ENCODE measurements at regions of chr10 and their contacts with region 1.

Region 1: DNA sequence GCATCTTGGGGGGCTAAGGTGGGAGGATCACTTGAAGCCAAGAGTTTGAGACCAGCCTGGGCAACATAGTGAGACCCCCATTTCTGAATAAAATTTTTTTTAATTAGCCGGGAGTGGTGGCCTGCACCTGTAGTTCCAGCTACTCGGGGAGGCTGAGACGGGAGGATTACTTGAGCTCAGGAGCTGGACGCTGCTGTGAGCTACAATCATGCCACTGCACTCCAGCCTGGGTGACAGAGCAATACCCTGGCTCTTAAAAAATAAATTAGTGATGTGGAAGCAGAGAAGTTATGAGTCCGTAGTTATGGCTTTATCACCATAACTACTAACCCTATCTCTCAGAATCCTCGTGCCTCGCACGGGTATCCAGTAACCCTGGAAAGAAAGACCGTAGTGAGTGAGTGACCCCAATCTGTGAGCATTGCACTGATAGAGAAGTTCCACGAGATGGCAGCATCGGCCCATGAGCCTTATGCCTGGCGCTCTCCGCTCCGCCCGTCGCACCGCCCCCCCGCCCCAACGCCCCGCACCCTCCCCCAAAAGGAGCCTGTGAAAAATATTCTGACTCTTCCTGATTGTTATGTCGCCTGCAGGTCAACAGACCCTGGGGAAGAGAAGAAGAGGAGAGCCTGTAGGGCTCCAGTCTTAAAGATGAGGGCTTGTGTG is 4.9 kb upstream of the SLC29A3 start:
- DNase-seq: peak; percentile 71
- ATAC-seq: peak; percentile 24
- H3K4me3 Mint-ChIP-seq: no peak overlapping the region
- H3K27ac Mint-ChIP-seq: no peak overlapping the region
- H3K4me1 Mint-ChIP-seq: peaks cover 18% of the 10 kb centered on the region
- H3K27me3 Mint-ChIP-seq: peaks cover 7% of the 10 kb centered on the region

Region 2: GRCh38 chr10:71255808-71256660 is 58.1 kb before region 1 on chr10:
- CTCF ChIA-PET with region 1: no interaction called
- POLR2A ChIA-PET with region 1: no interaction called
- intact Hi-C with region 1: no loop called
- DNase-seq: no peak
- ATAC-seq: no peak
- H3K4me3 Mint-ChIP-seq: no peak overlapping the region
- H3K27ac Mint-ChIP-seq: no peak overlapping the region
- H3K4me1 Mint-ChIP-seq: no peaks in the 10 kb centered on the region
- H3K27me3 Mint-ChIP-seq: no peaks in the 10 kb centered on the region

Region 3: GRCh38 chr10:71378336-71379117 is 64.4 kb after region 1 on chr10:
- CTCF ChIA-PET with region 1: interaction called, 12 read pairs
- POLR2A ChIA-PET with region 1: no interaction called
- intact Hi-C with region 1: loop called (anchors 1 to 2 kb)
- DNase-seq: no peak
- ATAC-seq: no peak
- H3K4me3 Mint-ChIP-seq: no peak overlapping the region
- H3K27ac Mint-ChIP-seq: no peak overlapping the region
- H3K4me1 Mint-ChIP-seq: peaks cover 4% of the 10 kb centered on the region
- H3K27me3 Mint-ChIP-seq: no peaks in the 10 kb centered on the region

Region 4: GRCh38 chr10:71383972-71384687 is 70.0 kb after region 1 on chr10:
- CTCF ChIA-PET with region 1: interaction called, 10 read pairs
- POLR2A ChIA-PET with region 1: no interaction called
- intact Hi-C with region 1: loop called in 1 of 2 experiments (anchors 2 kb)
- DNase-seq: peak; percentile 87
- ATAC-seq: peak; percentile 95
- H3K4me3 Mint-ChIP-seq: no peak overlapping the region
- H3K27ac Mint-ChIP-seq: no peak overlapping the region
- H3K4me1 Mint-ChIP-seq: no peaks in the 10 kb centered on the region
- H3K27me3 Mint-ChIP-seq: no peaks in the 10 kb centered on the region

Region 5: DNA sequence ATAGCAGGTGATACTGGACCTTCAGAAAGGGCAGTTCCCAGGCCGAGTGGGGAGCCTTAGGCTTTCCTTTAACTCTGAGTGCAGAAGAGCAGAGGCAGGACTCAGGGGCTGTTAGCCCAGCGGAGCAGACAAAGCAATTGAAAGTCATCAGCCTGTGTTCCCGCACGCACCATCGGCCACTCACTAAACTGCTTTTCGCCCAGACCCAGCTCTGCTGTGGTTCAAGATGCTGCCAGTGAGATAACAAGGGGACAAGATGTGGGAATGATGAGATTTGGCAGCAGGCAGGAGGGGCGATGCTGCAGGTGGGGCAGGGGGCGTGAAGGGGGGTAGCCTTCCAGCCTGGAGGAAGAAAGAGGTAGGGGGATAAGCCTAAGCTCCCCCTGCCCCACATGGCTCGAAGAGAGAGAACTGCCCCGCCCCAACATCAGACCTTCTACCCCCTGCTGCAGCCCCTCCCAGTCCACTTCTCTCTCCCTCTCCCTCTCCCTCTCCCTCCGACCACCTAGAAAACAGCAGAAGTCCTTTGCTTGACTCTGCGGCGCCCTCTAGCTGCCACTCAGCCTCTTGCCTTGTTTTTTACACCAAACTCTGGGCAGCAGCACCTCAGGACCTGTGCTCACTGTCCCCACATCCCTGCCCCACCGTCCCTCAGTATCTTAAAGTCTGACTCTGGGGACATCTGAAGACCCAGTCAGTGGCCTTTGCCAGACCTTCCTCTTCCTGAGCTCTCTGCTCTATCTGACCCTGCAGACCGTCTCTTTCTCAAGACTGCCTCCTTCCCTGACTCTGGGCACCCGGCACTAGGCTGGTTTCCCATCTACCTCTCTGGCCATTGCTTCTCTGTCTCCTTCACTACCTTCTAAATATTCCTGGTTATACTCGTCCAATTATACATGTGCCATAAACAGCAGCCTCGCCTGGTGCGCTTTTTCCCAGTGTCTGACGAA is 294.9 kb after region 1 on chr10:
- CTCF ChIA-PET with region 1: interaction called, 3 read pairs
- POLR2A ChIA-PET with region 1: no interaction called
- intact Hi-C with region 1: loop called (anchors 1 to 10 kb)
- DNase-seq: peak; percentile 86
- ATAC-seq: peak; percentile 71
- H3K4me3 Mint-ChIP-seq: no peak overlapping the region
- H3K27ac Mint-ChIP-seq: no peak overlapping the region
- H3K4me1 Mint-ChIP-seq: peaks cover 2% of the 10 kb centered on the region
- H3K27me3 Mint-ChIP-seq: no peaks in the 10 kb centered on the region

Region 6: DNA sequence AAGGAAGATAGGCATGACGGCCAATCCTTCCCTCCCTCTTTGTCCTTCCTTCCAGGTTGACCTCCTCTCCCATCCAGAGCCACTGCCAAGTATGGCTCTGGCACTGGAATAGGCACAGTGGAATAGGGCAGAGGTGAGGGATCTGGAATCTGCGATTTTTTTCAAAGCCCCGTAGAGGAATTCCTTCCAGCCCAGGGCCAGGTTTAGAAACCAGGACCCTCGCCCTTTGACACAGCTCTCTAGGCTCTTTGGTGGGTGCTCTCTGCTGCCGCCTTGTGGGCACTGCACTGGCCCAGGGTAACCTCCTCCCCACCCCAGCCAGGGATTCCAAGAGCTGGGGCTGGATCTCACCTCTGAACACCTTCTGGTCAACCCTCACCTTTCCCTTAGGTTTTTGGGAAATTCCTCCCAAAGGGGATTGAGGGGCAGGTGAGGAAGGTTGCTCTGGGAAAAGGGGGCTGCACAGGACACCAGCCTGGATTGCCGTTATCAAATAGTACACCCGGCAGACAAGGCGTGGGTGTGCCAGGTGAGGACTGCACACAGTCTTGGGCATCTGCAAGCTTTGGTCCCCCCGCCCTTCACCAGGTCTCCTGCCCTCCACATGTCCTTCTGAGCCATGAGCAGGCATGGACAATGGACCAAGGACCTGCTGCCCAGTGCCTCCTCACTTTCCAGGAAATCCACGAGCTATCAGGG is 382.6 kb after region 1 on chr10:
- CTCF ChIA-PET with region 1: interaction called, 6 read pairs
- POLR2A ChIA-PET with region 1: no interaction called
- intact Hi-C with region 1: loop called in 1 of 2 experiments (anchors 1 kb)
- DNase-seq: peak; percentile 85
- ATAC-seq: peak; percentile 82
- H3K4me3 Mint-ChIP-seq: no peak overlapping the region
- H3K27ac Mint-ChIP-seq: no peak overlapping the region
- H3K4me1 Mint-ChIP-seq: peaks cover 37% of the 10 kb centered on the region
- H3K27me3 Mint-ChIP-seq: no peaks in the 10 kb centered on the region

Region 7: DNA sequence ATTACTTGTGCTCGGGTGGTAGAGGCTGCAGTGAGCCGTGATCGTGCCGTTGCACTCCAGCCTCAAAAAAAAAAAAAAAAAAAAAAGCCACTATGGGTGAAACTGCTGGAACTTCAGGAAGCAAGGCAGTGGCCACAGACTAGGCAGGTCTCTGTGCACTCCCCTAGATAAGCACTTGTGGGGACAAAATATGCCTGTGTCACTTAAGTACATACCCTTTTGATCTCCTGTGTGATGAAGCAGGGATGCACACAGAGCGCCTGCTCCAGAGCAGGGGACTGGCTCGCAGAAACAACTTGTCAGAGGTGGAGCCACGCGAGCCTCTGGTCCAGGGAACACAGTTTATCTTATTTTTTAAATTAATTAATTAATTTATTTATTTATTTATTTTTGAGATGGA is 579.8 kb after region 1 on chr10:
- CTCF ChIA-PET with region 1: interaction called, 4 read pairs
- POLR2A ChIA-PET with region 1: no interaction called
- intact Hi-C with region 1: loop called in 1 of 2 experiments (anchors 1 kb)
- DNase-seq: no peak
- ATAC-seq: no peak
- H3K4me3 Mint-ChIP-seq: no peak overlapping the region
- H3K27ac Mint-ChIP-seq: no peak overlapping the region
- H3K4me1 Mint-ChIP-seq: peaks cover 6% of the 10 kb centered on the region
- H3K27me3 Mint-ChIP-seq: peaks cover 3% of the 10 kb centered on the region